ENCODE measurements at regions of chr15 and their contacts with region 1.

Region 1: DNA sequence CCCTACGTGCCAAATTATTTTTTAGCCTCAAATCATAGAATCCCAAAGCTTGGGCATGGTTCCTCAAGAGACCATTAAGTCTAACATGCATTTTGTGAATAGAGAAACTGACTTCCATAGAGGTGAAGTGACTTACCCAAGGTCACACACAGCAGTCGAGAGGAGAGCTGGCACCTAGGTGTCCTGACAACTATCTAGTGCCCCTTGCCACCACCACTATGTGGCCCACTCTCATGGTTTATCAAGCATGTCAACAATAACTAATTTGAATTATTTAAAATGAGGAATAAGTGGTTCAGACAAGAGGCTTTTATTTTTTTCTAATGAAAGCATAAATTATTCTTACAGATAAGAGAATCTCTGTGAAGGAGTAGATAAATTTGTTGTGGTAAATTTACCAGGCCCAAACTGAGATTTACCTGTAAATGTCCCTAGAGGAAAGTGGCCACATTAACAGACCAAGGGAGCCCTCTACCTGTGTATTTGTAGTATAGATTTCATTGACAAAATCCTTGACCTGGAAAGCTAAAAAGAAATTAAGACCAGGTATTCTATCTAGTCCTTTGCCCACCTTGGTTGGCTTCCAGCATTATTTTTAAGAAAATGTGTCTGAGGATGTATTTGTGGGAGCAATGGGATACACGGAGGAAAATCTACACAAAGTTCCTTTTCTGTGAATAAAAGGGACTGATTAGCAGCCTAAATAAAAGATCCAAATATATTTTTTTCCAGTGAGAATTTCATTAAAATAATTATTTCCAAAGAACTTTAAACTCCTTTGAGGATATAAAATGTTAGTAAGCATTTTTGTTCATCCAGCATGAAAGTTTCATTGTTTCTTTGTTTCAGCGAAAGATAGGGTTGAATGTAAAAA is 49.1 kb downstream of the IQCH start:
- DNase-seq: peak; percentile 23
- H3K4me3 ChIP-seq: no peak overlapping the region
- H3K27ac ChIP-seq: no peak overlapping the region
- H3K4me1 ChIP-seq: no peaks in the 10 kb centered on the region
- H3K27me3 ChIP-seq: no peaks in the 10 kb centered on the region
- CTCF ChIP-seq: peak; percentile 32 to 61

Region 2: DNA sequence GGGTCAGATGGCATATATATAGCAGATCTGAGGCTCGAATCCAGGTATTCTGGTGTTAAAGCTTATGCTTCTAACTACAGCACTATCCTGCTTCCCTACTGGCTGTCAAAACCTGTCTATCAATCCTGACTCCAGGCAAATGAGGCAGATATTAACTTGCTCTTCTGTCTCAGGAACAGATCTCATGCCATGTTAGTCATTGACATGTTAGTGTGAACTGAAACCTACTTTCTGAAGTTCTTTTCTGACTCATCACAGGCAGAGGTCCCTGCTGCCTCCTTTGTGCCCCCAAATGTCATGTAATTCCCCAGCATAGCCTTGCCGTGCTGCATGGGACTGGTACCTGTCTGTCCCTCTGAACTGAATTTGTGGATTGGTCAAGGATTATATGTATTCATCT is 363.4 kb before region 1 on chr15:
- CTCF ChIA-PET with region 1: no interaction called
- dilution Hi-C with region 1: no loop called
- in situ Hi-C with region 1: loop called (anchors 5 kb)
- intact Hi-C with region 1: no loop called
- DNase-seq: peak; percentile 73
- H3K4me3 ChIP-seq: no peak overlapping the region
- H3K27ac ChIP-seq: no peak overlapping the region
- H3K4me1 ChIP-seq: peaks cover 3% of the 10 kb centered on the region
- H3K27me3 ChIP-seq: no peaks in the 10 kb centered on the region
- CTCF ChIP-seq: no peak

Region 3: DNA sequence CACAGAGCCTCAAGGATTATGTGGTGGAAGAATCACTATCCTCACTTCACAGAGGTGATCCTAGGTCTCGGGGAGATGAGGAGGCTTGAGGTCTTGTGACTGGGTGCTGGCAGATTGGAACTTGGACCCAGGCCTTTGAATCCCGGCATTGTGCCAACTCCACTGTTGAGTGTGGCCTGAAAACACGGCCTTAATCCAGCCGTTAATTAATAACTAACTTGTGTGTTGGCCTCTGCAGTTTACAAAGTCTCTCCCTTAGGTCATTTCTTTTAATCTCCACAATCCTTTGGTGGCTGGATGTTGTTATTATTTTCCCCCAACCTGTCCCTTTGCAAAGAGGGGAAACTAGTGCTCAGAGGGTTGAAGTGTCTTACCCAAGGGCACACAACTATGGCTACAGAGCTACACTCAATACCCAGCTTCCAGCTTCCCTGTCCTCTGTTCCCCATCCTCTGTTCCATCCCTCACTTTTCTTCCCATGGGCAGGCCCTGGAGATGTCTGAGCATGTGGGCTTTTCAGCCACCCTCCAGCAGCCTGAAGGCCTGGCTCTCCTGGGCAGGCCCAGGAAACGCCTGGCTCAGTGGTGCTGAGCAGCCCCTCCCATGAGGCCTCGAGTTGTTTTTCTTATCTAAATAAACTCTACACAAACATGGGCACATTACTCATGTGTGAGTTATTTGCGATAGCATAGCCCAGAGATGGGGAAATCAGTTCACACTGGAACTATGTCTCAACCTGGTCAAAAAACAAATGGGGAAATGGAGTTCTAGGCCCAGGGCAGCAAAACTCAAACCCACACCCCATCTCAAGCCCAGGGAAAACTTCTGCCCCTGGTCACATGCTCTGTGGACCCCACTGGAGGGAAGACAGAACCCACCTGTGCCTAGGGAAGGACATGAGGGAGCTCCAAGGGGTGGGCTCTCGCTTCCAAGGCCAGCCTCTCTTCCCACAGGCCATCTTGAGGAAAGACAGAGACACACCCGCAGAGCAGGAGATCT is 255.1 kb before region 1 on chr15:
- CTCF ChIA-PET with region 1: no interaction called
- dilution Hi-C with region 1: no loop called
- in situ Hi-C with region 1: no loop called
- intact Hi-C with region 1: loop called (anchors 1 kb)
- DNase-seq: peak; percentile 86
- H3K4me3 ChIP-seq: no peak overlapping the region
- H3K27ac ChIP-seq: peak overlapping the region; percentile 89
- H3K4me1 ChIP-seq: peaks cover 44% of the 10 kb centered on the region
- H3K27me3 ChIP-seq: no peaks in the 10 kb centered on the region
- CTCF ChIP-seq: no peak

Region 4: GRCh38 chr15:67189326-67190051 is 114.2 kb before region 1 on chr15:
- CTCF ChIA-PET with region 1: no interaction called
- dilution Hi-C with region 1: no loop called
- in situ Hi-C with region 1: no loop called
- intact Hi-C with region 1: loop called (anchors 5 kb)
- DNase-seq: no peak
- H3K4me3 ChIP-seq: no peak overlapping the region
- H3K27ac ChIP-seq: no peak overlapping the region
- H3K4me1 ChIP-seq: no peaks in the 10 kb centered on the region
- H3K27me3 ChIP-seq: no peaks in the 10 kb centered on the region
- CTCF ChIP-seq: no peak

Region 5: GRCh38 chr15:67225336-67225735 is 78.4 kb before region 1 on chr15:
- CTCF ChIA-PET with region 1: no interaction called
- dilution Hi-C with region 1: no loop called
- in situ Hi-C with region 1: no loop called
- intact Hi-C with region 1: no loop called
- DNase-seq: peak; percentile 78
- H3K4me3 ChIP-seq: no peak overlapping the region
- H3K27ac ChIP-seq: peak overlapping the region; percentile 95
- H3K4me1 ChIP-seq: peaks cover 33% of the 10 kb centered on the region
- H3K27me3 ChIP-seq: no peaks in the 10 kb centered on the region
- CTCF ChIP-seq: no peak

Region 6: DNA sequence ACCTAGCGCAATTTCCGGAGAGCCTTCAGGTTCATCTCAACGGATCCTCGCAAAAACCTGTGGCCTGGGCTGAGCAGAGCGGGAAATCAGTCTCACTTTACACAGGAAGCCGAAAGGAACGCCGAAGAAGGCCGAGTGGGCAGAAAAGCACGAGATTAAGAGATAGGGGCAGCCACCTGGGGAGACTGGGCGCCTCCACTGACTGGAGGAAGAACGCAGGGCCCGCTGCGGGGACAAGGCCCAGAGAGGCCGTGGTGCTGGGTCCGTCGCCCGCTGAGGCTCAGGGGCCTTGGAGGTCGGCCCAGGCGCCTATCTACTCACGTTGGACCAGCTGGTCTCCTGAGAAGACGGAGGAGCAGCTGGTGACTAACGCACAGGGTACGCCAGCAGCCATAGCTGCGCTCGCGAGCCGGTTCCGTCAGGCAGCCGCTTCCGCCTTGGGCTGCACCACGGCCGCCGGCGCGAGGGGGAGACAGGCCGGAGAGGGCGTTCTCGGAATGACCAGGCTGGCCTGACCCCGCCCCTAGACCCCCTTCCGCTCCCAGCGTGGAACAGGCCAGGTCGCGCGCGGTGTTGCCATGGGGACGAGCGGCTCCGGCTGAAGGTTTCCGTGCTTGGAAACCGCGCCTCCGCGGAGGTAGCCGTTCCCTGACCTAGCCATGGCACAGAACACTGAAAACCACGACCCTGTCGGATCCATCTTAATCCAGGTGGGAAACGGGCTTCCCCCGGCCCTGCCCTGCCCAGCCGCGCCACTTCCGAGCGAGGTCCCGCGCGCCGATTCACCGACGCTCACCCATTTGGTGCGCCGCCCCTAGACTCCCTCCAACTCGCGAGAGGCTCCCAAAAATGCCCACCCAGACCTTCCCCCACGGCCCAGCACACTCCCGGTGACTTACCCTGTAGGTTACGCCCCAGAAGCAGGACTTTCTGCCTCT is 49.2 kb before region 1 on chr15 and contains the starts of genes AAGAB and IQCH:
- CTCF ChIA-PET with region 1: no interaction called
- dilution Hi-C with region 1: no loop called
- in situ Hi-C with region 1: no loop called
- intact Hi-C with region 1: loop called (anchors 5 kb)
- DNase-seq: peak; percentile 99
- H3K4me3 ChIP-seq: peak within 1 kb of the TSS; percentile 66 to 80 (median 78)
- H3K27ac ChIP-seq: peak within 1 kb of the TSS; percentile 98
- H3K4me1 ChIP-seq: no peaks in the 10 kb centered on the region
- H3K27me3 ChIP-seq: no peaks in the 10 kb centered on the region
- CTCF ChIP-seq: no peak
- total RNA-seq, gene AAGAB: 52.2 to 62.5 TPM
- total RNA-seq, gene IQCH: 4.9 to 8.8 TPM

Region 7: GRCh38 chr15:67366904-67367303 is 63.2 kb after region 1 on chr15:
- CTCF ChIA-PET with region 1: no interaction called
- dilution Hi-C with region 1: no loop called
- in situ Hi-C with region 1: no loop called
- intact Hi-C with region 1: no loop called
- DNase-seq: no peak
- H3K4me3 ChIP-seq: no peak overlapping the region
- H3K27ac ChIP-seq: no peak overlapping the region
- H3K4me1 ChIP-seq: no peaks in the 10 kb centered on the region
- H3K27me3 ChIP-seq: no peaks in the 10 kb centered on the region
- CTCF ChIP-seq: no peak

Measured in mammary epithelial cell (primary cell).